B cell (primary cell): ENCODE measurements at regions of chr12 and their contacts with region 1.

Region 1: GRCh38 chr12:50182461-50182860 is 15.3 kb upstream of the CERS5 start:
- DNase-seq: no peak
- ATAC-seq: no peak
- H3K4me3 ChIP-seq: no peak overlapping the region
- H3K4me3 Mint-ChIP-seq: no peak overlapping the region
- H3K27ac ChIP-seq: no peak overlapping the region
- H3K27ac Mint-ChIP-seq: no peak overlapping the region
- H3K4me1 ChIP-seq: no peaks in the 10 kb centered on the region
- H3K4me1 Mint-ChIP-seq: no peaks in the 10 kb centered on the region
- H3K27me3 ChIP-seq: no peaks in the 10 kb centered on the region
- H3K27me3 Mint-ChIP-seq: no peaks in the 10 kb centered on the region
- CTCF ChIP-seq: no peak

Region 2: GRCh38 chr12:50650285-50650684 is 467.8 kb after region 1 on chr12:
- CTCF ChIA-PET with region 1: no interaction called
- POLR2A ChIA-PET with region 1: interaction called, 13 read pairs
- intact Hi-C with region 1: no loop called
- DNase-seq: no peak
- ATAC-seq: no peak
- H3K4me3 ChIP-seq: no peak overlapping the region
- H3K4me3 Mint-ChIP-seq: no peak overlapping the region
- H3K27ac ChIP-seq: no peak overlapping the region
- H3K27ac Mint-ChIP-seq: no peak overlapping the region
- H3K4me1 ChIP-seq: no peaks in the 10 kb centered on the region
- H3K4me1 Mint-ChIP-seq: peaks cover 4% of the 10 kb centered on the region
- H3K27me3 ChIP-seq: no peaks in the 10 kb centered on the region
- H3K27me3 Mint-ChIP-seq: no peaks in the 10 kb centered on the region
- CTCF ChIP-seq: no peak